PC-9 (cell line): ENCODE measurements at regions of chr19 and their contacts with region 1.

Region 1: GRCh38 chr19:40139533-40140287 is 49.0 kb upstream of the ZNF780A start:
- DNase-seq: peak in 1 of 2 experiments; percentile 54
- H3K4me3 ChIP-seq: no peak overlapping the region
- H3K27ac ChIP-seq: no peak overlapping the region
- H3K4me1 ChIP-seq: no peaks in the 10 kb centered on the region
- H3K27me3 ChIP-seq: peaks cover 31% of the 10 kb centered on the region
- CTCF ChIP-seq: peak; percentile 84

Region 2: GRCh38 chr19:40155749-40156265 is 16.1 kb after region 1 on chr19:
- CTCF ChIA-PET with region 1: no interaction called
- POLR2A ChIA-PET with region 1: no interaction called
- intact Hi-C with region 1: loop called (anchors 1 kb)
- DNase-seq: no peak
- H3K4me3 ChIP-seq: no peak overlapping the region
- H3K27ac ChIP-seq: no peak overlapping the region
- H3K4me1 ChIP-seq: no peaks in the 10 kb centered on the region
- H3K27me3 ChIP-seq: no peaks in the 10 kb centered on the region
- CTCF ChIP-seq: peak; percentile 57

Region 3: GRCh38 chr19:40305403-40305802 is 165.7 kb after region 1 on chr19:
- CTCF ChIA-PET with region 1: interaction called, 3 read pairs
- POLR2A ChIA-PET with region 1: no interaction called
- intact Hi-C with region 1: loop called (anchors 10 kb)
- DNase-seq: peak; percentile 67 to 74
- H3K4me3 ChIP-seq: no peak overlapping the region
- H3K27ac ChIP-seq: no peak overlapping the region
- H3K4me1 ChIP-seq: no peaks in the 10 kb centered on the region
- H3K27me3 ChIP-seq: no peaks in the 10 kb centered on the region
- CTCF ChIP-seq: peak; percentile 86

Region 4: GRCh38 chr19:40650749-40651305 is 511.1 kb after region 1 on chr19:
- CTCF ChIA-PET with region 1: no interaction called
- POLR2A ChIA-PET with region 1: no interaction called
- intact Hi-C with region 1: loop called (anchors 5 kb)
- DNase-seq: no peak
- H3K4me3 ChIP-seq: no peak overlapping the region
- H3K27ac ChIP-seq: no peak overlapping the region
- H3K4me1 ChIP-seq: peaks cover 10% of the 10 kb centered on the region
- H3K27me3 ChIP-seq: no peaks in the 10 kb centered on the region
- CTCF ChIP-seq: no peak